CD8-positive, alpha-beta T cell (primary cell): ENCODE measurements at regions of chr7 and their contacts with region 1.

Region 1: DNA sequence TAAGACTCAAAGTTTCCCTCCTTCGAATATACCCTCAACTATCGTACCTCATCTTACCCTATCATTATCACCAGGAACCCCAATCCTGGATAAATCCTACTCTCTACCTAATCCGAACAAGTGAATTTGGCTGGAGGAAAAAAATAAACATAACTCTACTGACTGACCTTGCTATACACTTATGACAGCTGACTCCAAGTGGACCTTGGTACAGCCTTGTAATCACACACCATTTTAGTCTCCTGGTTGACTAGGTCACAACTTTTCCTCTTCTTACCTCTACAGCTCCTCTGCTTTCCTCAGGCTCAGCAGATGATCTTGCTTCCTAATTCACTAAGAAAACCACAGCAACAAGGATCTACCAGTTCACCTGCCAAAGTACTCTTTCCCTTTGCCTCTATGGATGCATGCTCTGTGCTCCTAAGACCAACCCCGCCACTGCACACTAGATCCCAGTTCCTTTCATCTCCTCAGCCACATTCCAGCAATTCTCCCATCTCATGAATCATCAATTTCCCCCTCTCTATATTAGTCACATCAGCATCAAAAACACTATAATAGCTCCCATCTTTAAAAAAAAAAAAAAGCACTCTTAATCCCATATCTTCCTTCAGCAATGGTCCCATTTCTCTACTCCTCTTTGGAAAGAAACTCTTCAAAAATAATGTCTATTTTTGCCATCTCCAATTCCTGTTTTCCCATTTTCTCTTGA is 35.5 kb downstream of the COA1 start:
- DNase-seq: no peak
- ATAC-seq: no peak
- H3K4me3 ChIP-seq: no peak overlapping the region
- H3K4me3 Mint-ChIP-seq: no peak overlapping the region
- H3K27ac ChIP-seq: no peak overlapping the region
- H3K27ac Mint-ChIP-seq: no peak overlapping the region
- H3K4me1 ChIP-seq: peaks cover 67% of the 10 kb centered on the region
- H3K4me1 Mint-ChIP-seq: peaks cover 52% of the 10 kb centered on the region
- H3K27me3 ChIP-seq: no peaks in the 10 kb centered on the region
- H3K27me3 Mint-ChIP-seq: no peaks in the 10 kb centered on the region
- CTCF ChIP-seq: no peak

Region 2: GRCh38 chr7:43674584-43675436 is 19.0 kb before region 1 on chr7:
- CTCF ChIA-PET with region 1: interaction called, 7 read pairs
- POLR2A ChIA-PET with region 1: interaction called, 5 read pairs
- intact Hi-C with region 1: loop called (anchors 2 kb)
- DNase-seq: no peak
- ATAC-seq: no peak
- H3K4me3 ChIP-seq: no peak overlapping the region
- H3K4me3 Mint-ChIP-seq: no peak overlapping the region
- H3K27ac ChIP-seq: no peak overlapping the region
- H3K27ac Mint-ChIP-seq: no peak overlapping the region
- H3K4me1 ChIP-seq: peaks cover 38% of the 10 kb centered on the region
- H3K4me1 Mint-ChIP-seq: peaks cover 84% of the 10 kb centered on the region
- H3K27me3 ChIP-seq: no peaks in the 10 kb centered on the region
- H3K27me3 Mint-ChIP-seq: no peaks in the 10 kb centered on the region
- CTCF ChIP-seq: no peak

Region 3: DNA sequence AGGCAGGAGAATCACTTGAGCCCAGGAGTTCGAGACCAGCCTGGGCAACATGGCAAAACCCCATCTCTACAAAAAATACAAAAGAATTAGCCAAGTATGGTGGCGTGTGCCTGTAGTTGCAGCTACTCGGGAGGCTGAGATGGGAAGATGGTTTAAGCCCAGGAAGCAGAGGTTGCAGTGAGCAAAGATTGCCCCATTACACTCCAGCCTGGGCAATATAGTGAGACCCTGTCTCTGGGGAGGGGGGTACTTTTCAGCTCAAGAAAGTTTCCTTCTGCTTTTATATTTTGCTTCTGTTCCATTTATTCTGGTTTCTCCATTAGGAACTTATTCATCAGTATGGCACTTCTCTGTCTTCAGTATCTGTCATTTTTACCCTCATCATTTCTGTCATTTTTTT is 13.1 kb before region 1 on chr7:
- CTCF ChIA-PET with region 1: interaction called, 3 read pairs
- POLR2A ChIA-PET with region 1: interaction called, 5 read pairs
- intact Hi-C with region 1: loop called (anchors 1 to 2 kb)
- DNase-seq: no peak
- ATAC-seq: no peak
- H3K4me3 ChIP-seq: no peak overlapping the region
- H3K4me3 Mint-ChIP-seq: no peak overlapping the region
- H3K27ac ChIP-seq: peak overlapping the region in 1 of 2 experiments; percentile 5
- H3K27ac Mint-ChIP-seq: peak overlapping the region; percentile 88
- H3K4me1 ChIP-seq: peaks cover 56% of the 10 kb centered on the region
- H3K4me1 Mint-ChIP-seq: peaks cover 88% of the 10 kb centered on the region
- H3K27me3 ChIP-seq: no peaks in the 10 kb centered on the region
- H3K27me3 Mint-ChIP-seq: no peaks in the 10 kb centered on the region
- CTCF ChIP-seq: no peak